MCF 10A (cell line): ENCODE measurements at regions of chr19 and their contacts with region 1.

Region 1: GRCh38 chr19:3471954-3472655 is 8.2 kb downstream of the SMIM24 start:
- DNase-seq: peak; percentile 34
- H3K4me3 Mint-ChIP-seq: no peak overlapping the region
- H3K27ac Mint-ChIP-seq: no peak overlapping the region
- H3K4me1 Mint-ChIP-seq: peaks cover 6% of the 10 kb centered on the region
- H3K27me3 Mint-ChIP-seq: no peaks in the 10 kb centered on the region
- CTCF ChIP-seq: peak; percentile 79

Region 2: DNA sequence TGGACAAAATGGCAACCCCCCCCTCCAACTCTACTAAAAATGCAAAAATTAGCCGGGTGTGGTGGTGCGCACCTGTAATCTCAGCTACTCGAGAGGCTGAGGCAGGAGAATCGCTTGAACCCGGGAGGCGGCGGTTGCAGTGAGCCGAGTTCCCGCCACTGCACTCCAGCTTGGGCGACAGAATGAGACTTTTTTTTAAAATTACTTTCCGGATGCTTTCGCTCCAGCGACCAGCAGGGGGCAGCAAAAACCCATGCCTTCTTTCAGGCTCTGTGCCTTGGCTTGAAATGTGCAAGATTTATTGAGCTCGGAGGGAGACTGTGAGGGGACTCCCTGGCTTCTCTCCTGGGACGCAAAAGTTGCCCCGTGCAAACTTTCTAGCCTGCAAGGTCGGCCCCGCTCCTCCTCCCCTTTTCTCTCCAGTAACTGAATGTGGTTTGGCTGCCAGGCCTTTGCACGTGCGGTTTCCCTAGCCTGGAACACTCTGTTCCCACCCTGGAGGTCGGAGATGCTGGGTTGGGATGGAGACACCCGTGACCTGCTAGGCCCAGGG is 167.2 kb before region 1 on chr19:
- CTCF ChIA-PET with region 1: interaction called, 51 read pairs
- POLR2A ChIA-PET with region 1: interaction called, 10 read pairs
- intact Hi-C with region 1: loop called (anchors 1 kb)
- DNase-seq: peak; percentile 84
- H3K4me3 Mint-ChIP-seq: no peak overlapping the region
- H3K27ac Mint-ChIP-seq: no peak overlapping the region
- H3K4me1 Mint-ChIP-seq: peaks cover 3% of the 10 kb centered on the region
- H3K27me3 Mint-ChIP-seq: peaks cover 16% of the 10 kb centered on the region
- CTCF ChIP-seq: peak; percentile 95

Region 3: DNA sequence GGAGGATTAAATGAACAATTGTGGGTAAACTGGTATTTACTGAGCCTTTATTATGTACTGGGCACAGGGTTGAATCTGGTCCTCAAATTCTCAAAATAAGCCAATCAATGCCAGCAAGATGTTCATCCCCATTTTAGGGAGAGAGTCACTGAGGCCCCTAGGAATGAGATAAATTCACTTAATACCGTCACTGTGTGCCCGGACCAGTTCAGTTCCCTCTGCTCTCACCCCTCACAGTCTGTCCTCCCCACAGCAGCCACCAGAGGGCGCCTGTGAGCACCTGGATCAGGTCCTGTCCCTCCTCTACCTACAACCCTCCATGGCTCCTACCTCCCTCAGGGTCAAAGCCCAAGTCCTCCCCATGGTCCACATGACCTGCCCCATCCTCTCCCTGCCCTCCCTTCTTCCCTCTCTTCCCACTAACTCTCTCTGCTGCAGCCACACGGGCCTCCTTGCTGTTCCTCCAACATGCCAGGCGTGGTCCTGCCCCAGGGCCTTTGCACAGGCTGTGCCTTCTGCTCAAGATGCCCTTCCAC is 147.7 kb before region 1 on chr19:
- CTCF ChIA-PET with region 1: interaction called, 55 read pairs
- POLR2A ChIA-PET with region 1: interaction called, 7 read pairs
- intact Hi-C with region 1: loop called (anchors 1 kb)
- DNase-seq: peak; percentile 62
- H3K4me3 Mint-ChIP-seq: no peak overlapping the region
- H3K27ac Mint-ChIP-seq: no peak overlapping the region
- H3K4me1 Mint-ChIP-seq: no peaks in the 10 kb centered on the region
- H3K27me3 Mint-ChIP-seq: peaks cover 39% of the 10 kb centered on the region
- CTCF ChIP-seq: peak; percentile 75

Region 4: DNA sequence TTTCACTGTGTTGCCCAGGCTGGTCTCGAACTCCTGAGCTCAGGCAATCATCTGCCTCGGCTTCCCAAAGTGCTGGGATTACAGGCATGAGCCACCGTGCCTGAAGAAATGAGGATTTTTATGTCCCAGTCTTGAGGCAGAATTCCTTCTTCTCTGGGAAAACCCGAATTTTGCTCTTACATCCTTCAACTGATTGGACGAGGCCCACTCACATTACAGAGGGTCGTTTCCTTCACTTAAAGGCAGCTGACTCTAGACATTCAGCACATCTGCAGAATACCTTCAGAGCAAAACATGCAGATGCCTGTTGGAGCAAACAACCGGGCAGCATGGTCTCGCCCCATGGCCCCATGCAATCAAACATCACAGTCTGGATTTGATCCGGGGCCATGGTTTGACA is 142.1 kb before region 1 on chr19:
- CTCF ChIA-PET with region 1: interaction called, 55 read pairs
- POLR2A ChIA-PET with region 1: interaction called, 7 read pairs
- intact Hi-C with region 1: loop called (anchors 1 kb)
- DNase-seq: no peak
- H3K4me3 Mint-ChIP-seq: no peak overlapping the region
- H3K27ac Mint-ChIP-seq: no peak overlapping the region
- H3K4me1 Mint-ChIP-seq: peaks cover 16% of the 10 kb centered on the region
- H3K27me3 Mint-ChIP-seq: peaks cover 13% of the 10 kb centered on the region
- CTCF ChIP-seq: no peak